IMR-90 (cell line): ENCODE measurements at regions of chr17 and their contacts with region 1.

Region 1: DNA sequence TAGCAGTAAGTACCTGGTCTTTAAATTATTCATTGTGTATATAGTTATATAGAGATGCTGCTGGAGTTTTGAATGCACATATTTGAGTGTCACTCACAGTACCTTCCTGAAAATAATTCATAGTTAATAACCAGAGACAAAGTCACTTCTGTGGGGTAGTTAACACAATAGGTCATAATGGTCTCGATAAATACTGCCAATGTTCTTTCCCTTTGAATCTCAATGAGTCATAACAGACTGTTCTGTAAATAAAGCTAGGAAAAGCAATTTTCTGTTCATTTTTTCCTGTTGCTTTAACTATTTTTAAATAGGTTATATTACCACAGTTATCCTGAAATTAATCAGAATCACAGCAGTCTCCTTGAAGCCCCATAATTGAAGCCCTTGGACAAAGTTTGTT is 87.2 kb downstream of the MAP2K4 start:
- DNase-seq: peak; percentile 56
- ATAC-seq: peak; percentile 71; the same call in 1 of the 2 replicates
- H3K4me3 ChIP-seq: no peak overlapping the region
- H3K27ac ChIP-seq: no peak overlapping the region
- H3K4me1 ChIP-seq: peaks cover 5% of the 10 kb centered on the region
- H3K27me3 ChIP-seq: no peaks in the 10 kb centered on the region
- CTCF ChIP-seq: no peak
- POLR2A ChIP-seq: no peak
- RAD21 ChIP-seq: no peak

Region 2: GRCh38 chr17:12020642-12021622 is 87.0 kb before region 1 on chr17 and contains the start of gene MAP2K4:
- CTCF ChIA-PET with region 1: no interaction called
- POLR2A ChIA-PET with region 1: no interaction called
- dilution Hi-C with region 1: no loop called
- in situ Hi-C with region 1: no loop called
- intact Hi-C with region 1: loop called (anchors 2 kb)
- DNase-seq: peak; percentile 84
- ATAC-seq: peak; percentile 99
- H3K4me3 ChIP-seq: peak within 1 kb of the TSS; percentile 67
- H3K27ac ChIP-seq: peak within 1 kb of the TSS; percentile 55
- H3K4me1 ChIP-seq: peaks cover 2% of the 10 kb centered on the region
- H3K27me3 ChIP-seq: peaks cover 3% of the 10 kb centered on the region; the same call in 1 of the 2 replicates
- CTCF ChIP-seq: no peak
- POLR2A ChIP-seq: peak; percentile 94
- RAD21 ChIP-seq: no peak
- total RNA-seq, gene MAP2K4: 32.6 and 33.3 TPM in 2 replicates

Region 3: GRCh38 chr17:12041316-12041715 is 66.6 kb before region 1 on chr17:
- CTCF ChIA-PET with region 1: no interaction called
- POLR2A ChIA-PET with region 1: no interaction called
- dilution Hi-C with region 1: no loop called
- in situ Hi-C with region 1: no loop called
- intact Hi-C with region 1: loop called (anchors 5 kb)
- DNase-seq: peak; percentile 87
- ATAC-seq: peak; percentile 83
- H3K4me3 ChIP-seq: no peak overlapping the region
- H3K27ac ChIP-seq: no peak overlapping the region
- H3K4me1 ChIP-seq: peaks cover 2% of the 10 kb centered on the region; the same call in 1 of the 2 replicates
- H3K27me3 ChIP-seq: no peaks in the 10 kb centered on the region
- CTCF ChIP-seq: no peak
- POLR2A ChIP-seq: no peak
- RAD21 ChIP-seq: no peak